AG04449 (cell line): ENCODE measurements at regions of chr6 and their contacts with region 1.

Region 1: GRCh38 chr6:73817253-73817652 is 121.2 kb downstream of the CD109 start:
- DNase-seq: no peak
- H3K4me3 ChIP-seq: no peak overlapping the region
- CTCF ChIP-seq: no peak

Region 2: GRCh38 chr6:73803562-73804241 is 13.6 kb before region 1 on chr6:
- CTCF ChIA-PET with region 1: interaction called, 11 read pairs
- POLR2A ChIA-PET with region 1: no interaction called
- DNase-seq: peak; percentile 98
- H3K4me3 ChIP-seq: no peak overlapping the region
- CTCF ChIP-seq: peak; percentile 62